Activated CD4-positive, alpha-beta memory T cell treated with anti-CD3 and anti-CD28 coated beads, Interleukin-2, amount 10 ng/mL, durations not matched to agents 7 days and 5 days (primary cell): ENCODE measurements at regions of chr17 and their contacts with region 1.

Region 1: GRCh38 chr17:48836004-48836403 is 5.2 kb downstream of the CALCOCO2 start:
- DNase-seq: peak; percentile 22
- H3K4me3 Mint-ChIP-seq: no peak overlapping the region
- H3K27ac Mint-ChIP-seq: peak overlapping the region; percentile 16
- H3K4me1 Mint-ChIP-seq: peaks cover 92% of the 10 kb centered on the region
- H3K27me3 Mint-ChIP-seq: no peaks in the 10 kb centered on the region

Region 2: DNA sequence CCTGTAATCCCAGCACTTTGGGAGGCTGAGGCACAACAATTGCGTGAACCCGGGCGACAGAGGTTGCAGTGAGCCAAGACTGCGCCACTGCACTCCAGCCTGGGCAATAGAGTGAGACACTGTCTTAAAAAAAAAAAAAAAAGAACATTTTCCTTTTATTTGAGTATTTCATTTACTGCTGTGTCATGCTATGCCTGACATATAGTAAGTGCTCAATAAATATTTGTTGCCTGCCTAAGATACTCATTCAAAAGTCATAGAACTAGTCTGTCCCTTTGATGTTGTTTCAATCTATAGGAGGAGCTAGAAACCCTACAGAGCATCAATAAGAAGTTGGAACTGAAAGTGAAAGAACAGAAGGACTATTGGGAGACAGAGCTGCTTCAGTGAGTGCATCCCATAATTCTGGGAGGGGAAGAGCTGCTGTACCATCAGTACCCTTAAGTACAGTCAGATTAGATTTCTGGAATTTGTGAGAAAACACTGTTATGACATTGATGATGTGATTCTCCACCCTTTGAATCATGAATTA is 14.9 kb after region 1 on chr17:
- CTCF ChIA-PET with region 1: interaction called, 21 read pairs
- POLR2A ChIA-PET with region 1: interaction called, 6 read pairs
- DNase-seq: no peak
- H3K4me3 Mint-ChIP-seq: no peak overlapping the region
- H3K27ac Mint-ChIP-seq: peak overlapping the region; percentile 1
- H3K4me1 Mint-ChIP-seq: peaks cover 30% of the 10 kb centered on the region
- H3K27me3 Mint-ChIP-seq: no peaks in the 10 kb centered on the region